ENCODE measurements at regions of chr3 and their contacts with region 1.

Region 1: GRCh38 chr3:124834723-124835718 is 52.1 kb downstream of the ITGB5 start:
- DNase-seq: peak; percentile 87 to 92
- ATAC-seq: peak; percentile 89 to 90
- H3K4me3 ChIP-seq: peak overlapping the region; percentile 26 to 43 (median 40)
- H3K27ac ChIP-seq: peak overlapping the region; percentile 73 to 87 (median 84)
- H3K4me1 ChIP-seq: peaks cover 37% of the 10 kb centered on the region in 2 donors
- H3K27me3 ChIP-seq: no peaks in the 10 kb centered on the region
- CTCF ChIP-seq: peak in 1 of 5 experiments; percentile 16
- POLR2A ChIP-seq: peak; percentile 22 to 68

Region 2: DNA sequence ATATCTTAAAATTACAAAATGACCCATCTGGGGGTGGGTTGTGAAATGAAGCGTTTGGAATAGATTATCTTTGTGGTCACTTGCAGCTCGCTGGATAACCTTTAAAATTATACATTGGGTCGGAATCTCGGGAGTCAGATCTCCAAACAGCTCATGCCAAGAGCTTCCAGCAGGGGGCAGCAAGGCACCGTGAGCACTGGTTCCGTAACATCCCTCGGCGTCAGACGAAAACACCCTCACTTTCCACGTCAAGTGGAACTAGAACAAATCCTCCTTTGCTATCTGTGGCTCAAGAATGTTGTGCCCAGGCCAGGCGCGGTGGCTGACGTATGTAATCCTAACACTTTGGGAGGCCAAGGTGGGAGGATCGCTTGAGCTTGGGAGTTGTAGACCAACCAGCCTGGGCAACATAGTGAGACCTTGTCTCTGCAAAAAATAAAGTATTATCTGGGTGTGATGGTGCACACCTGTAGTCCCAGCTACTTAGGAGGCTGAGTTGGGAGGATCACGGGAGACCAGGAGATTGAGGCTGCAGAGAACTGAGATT is 73.7 kb before region 1 on chr3:
- in situ Hi-C with region 1: no loop called
- intact Hi-C with region 1: loop called (anchors 1 kb)
- DNase-seq: peak; percentile 57 to 76
- ATAC-seq: peak; percentile 87 to 93
- H3K4me3 ChIP-seq: no peak overlapping the region
- H3K27ac ChIP-seq: peak overlapping the region; percentile 1 to 39 (median 16)
- H3K4me1 ChIP-seq: peaks cover 6 to 7% of the 10 kb centered on the region in 2 donors
- H3K27me3 ChIP-seq: no peaks in the 10 kb centered on the region
- CTCF ChIP-seq: peak; percentile 95 to 99 (median 97)
- POLR2A ChIP-seq: no peak

Region 3: DNA sequence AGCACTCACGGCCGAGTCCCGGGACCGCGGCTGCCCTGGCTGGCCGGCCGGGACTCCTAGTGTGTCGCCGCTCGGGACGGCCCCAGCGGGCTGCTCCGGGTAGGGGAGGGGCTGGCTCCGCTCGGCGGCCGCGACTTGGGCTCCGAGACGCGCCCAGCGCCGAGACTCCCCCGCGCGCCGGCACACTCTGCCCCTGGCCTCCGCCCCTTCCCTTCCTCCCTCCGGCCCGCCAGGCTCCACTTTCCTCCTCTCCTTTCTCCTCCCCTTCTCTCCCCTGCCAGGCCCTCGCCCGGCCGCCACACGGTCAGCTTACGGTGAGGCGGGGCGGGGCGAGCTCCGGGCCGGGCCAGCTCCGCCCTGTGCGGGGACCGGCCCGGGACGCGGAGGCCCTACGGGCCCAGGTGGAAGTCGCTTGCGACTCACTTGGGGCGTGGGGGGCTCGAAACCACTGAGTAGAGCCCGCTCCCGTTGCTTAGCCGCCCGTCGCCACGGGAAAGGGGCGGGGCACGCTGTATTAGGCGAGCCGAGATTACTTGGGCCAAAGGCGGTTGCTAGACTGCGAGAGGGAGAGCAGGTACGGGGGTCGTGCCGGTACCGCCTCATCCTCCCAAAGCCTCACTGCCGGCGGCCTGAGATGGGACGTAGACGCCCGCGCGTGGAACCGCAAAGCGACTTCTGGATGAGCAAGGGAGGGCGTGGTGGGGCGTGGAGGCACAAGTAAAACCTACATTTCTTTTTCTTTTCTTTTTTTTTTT is 52.3 kb after region 1 on chr3 and contains the start of gene ITGB5:
- in situ Hi-C with region 1: loop called in 1 of 4 experiments (anchors 10 kb)
- intact Hi-C with region 1: loop called (anchors 2 kb)
- DNase-seq: peak; percentile 81 to 83
- ATAC-seq: peak; percentile 89
- H3K4me3 ChIP-seq: peak within 1 kb of the TSS; percentile 60 to 95 (median 64)
- H3K27ac ChIP-seq: peak within 1 kb of the TSS; percentile 80 to 92 (median 90)
- H3K4me1 ChIP-seq: peaks cover 5 to 6% of the 10 kb centered on the region in 2 donors
- H3K27me3 ChIP-seq: no peaks in the 10 kb centered on the region
- CTCF ChIP-seq: no peak
- POLR2A ChIP-seq: peak; percentile 71 to 82
- total RNA-seq, gene ITGB5: 35.2 to 101 (median 71.3) TPM

Region 4: DNA sequence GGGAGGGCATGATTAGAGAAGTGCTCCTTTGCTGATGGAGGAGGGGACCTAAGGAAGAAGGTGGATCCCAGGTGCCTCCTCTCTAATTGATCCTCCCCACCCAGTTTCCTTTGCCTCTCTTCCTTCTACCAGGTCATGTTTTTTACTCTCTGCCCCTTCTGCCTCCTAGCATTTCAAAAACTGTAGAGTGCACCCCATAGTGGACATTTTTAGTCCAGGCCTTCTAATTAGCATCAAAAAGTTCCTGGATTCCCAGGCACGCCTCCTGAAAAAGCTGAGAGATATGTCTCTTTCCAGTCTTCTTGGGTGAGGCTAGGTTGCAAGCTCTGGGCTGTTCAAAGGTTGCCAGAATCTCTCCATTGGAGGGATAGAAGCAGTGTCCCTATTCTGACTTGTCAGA is 70.8 kb after region 1 on chr3:
- in situ Hi-C with region 1: no loop called
- intact Hi-C with region 1: loop called (anchors 5 kb)
- DNase-seq: no peak
- ATAC-seq: no peak
- H3K4me3 ChIP-seq: no peak overlapping the region
- H3K27ac ChIP-seq: no peak overlapping the region
- H3K4me1 ChIP-seq: no peaks in the 10 kb centered on the region
- H3K27me3 ChIP-seq: no peaks in the 10 kb centered on the region
- CTCF ChIP-seq: no peak
- POLR2A ChIP-seq: no peak

Region 5: DNA sequence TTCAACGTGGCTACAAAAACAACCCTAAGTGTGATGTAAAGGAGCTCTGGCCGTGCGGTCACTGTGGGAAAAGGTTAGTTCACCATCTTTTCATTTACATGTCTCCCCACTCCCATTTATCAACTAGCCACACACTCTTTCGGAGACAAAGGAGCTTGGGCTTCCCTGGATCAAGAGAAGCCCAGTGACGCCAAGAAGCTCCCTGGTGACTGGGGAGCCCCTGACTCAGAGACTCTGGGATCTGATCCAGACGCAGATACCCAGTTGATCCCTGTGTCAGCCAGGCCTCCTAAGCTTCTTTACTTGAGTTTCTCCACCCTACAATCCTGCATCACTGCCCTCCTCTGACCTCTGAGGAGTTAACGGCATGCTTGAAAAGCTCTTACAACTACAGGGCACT is 176.9 kb after region 1 on chr3:
- in situ Hi-C with region 1: no loop called
- intact Hi-C with region 1: no loop called
- DNase-seq: no peak
- ATAC-seq: no peak
- H3K4me3 ChIP-seq: no peak overlapping the region
- H3K27ac ChIP-seq: no peak overlapping the region
- H3K4me1 ChIP-seq: peaks cover 0 to 5% of the 10 kb centered on the region in 2 donors
- H3K27me3 ChIP-seq: no peaks in the 10 kb centered on the region
- CTCF ChIP-seq: no peak
- POLR2A ChIP-seq: no peak